Activated CD4-positive, alpha-beta T cell treated with anti-CD3 and anti-CD28 coated beads for 36 hours (primary cell): ENCODE measurements at regions of chr14 and their contacts with region 1.

Region 1: DNA sequence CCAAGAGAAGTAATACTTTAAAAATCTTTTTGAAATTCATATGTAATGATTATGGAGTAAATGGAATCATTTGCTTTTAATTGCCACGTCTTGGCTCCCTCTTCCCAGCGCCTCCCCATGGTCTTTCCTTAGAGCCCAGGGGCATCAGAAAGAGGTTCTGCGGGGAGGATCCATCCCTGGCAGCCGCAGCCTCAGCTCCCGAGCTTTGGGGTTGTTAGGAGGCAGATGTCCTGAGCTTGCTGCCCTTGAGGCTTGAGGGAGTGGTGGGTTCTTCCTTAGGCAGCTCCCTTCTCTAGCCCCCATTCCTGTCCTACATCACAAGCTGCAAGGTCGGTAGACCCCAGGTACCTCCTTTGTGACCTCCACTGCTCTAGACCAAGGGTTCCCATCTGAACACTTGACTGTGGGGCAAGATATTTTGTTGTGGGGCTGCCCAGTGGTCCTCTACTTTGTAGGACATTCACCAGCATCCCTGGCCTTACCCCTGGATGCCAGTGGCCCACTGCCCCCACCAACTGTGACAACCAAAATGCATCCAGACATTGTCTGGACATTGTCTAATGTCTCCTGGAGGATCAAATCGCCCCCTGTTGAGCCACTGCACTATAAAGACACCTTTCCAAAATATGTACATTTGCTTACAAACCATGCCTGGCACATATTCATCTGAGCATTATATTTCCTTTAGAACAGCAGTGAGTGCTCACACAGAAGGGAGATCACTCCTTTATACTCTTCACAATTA is 6.3 kb downstream of the PPP2R5C start:
- DNase-seq: no peak
- ATAC-seq: no peak
- H3K4me3 Mint-ChIP-seq: no peak overlapping the region
- H3K27ac Mint-ChIP-seq: no peak overlapping the region
- H3K4me1 Mint-ChIP-seq: peaks cover 42% of the 10 kb centered on the region
- H3K27me3 Mint-ChIP-seq: no peaks in the 10 kb centered on the region

Region 2: DNA sequence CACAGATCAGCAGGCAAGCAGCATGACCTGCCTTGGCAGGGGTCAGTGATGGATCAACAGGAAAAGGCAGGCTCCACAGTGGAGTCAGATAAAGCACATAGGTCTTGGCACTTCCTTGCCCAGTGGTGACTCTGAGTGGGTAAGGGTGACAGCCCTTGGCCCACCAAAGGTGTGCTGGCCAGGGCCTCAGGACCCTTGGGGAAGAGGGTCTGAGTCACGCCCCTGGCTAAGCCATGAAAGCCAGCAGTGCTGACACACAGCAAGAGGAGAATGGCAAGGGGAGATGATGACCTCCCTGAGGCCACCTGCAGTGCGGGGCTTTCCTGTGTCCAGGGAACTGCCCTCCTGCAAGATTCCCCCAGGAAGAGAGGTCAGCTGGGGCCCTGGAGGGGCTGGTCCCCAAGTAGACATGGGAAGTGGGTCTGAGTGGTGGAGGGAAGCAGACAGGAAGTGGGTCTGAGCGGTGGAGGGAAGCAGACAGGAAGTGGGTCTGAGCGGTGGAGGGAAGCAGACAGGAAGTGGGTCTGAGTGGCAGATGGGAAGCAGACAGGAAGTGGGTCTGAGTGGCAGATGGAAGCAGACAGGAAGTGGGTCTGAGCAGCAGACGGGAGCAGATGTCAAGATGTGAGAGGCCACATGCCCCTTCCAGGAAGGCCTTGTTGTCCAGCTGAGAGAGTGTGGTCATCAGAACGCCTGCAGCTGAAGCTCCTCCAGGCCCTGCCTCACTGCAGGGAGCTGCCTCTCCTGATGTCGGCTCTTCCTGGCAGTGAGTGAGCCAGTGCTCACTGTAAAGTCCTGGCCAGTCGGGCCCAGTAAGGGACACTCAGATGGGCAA is 171.7 kb before region 1 on chr14:
- CTCF ChIA-PET with region 1: no interaction called
- POLR2A ChIA-PET with region 1: no interaction called
- intact Hi-C with region 1: no loop called
- DNase-seq: peak; percentile 46
- ATAC-seq: peak; percentile 62
- H3K4me3 Mint-ChIP-seq: no peak overlapping the region
- H3K27ac Mint-ChIP-seq: peak overlapping the region; percentile 83
- H3K4me1 Mint-ChIP-seq: peaks cover 32% of the 10 kb centered on the region
- H3K27me3 Mint-ChIP-seq: no peaks in the 10 kb centered on the region

Region 3: DNA sequence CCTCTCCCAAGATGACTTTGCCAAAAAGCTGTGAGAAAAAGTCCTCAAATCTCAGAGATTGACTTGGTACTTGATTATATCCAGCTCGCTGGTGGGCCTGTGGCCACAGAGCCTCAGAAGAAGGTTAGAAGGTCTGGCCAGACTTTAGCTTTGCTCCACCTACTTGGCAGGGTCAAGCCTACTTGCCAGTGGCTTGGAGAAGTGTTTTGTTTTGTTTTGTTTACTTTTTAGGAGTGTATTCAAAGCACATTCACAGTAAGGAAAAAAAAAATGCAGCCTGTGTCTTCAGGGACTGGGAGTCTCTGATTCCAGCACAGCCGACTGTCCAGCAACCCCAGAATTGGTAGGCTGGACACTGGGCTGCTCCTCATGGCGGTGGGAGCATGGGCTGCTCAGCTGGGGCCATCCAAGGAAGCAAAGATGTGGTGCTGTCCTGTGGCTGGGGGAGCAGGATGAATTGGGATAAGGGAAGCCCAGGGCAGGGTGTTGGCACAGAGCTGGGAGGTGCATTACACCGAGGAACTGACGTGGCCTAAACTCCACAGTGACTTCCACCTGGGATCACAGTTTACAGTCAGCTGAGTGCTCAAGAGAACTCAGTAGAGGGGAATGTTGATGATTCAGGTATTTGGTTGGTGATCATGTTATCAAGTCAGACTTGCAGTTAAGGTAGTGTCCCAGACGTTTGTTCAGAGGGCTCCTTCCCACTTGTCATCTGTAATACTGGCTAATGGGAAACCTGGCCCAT is 67.2 kb after region 1 on chr14:
- CTCF ChIA-PET with region 1: interaction called, 17 read pairs
- POLR2A ChIA-PET with region 1: no interaction called
- intact Hi-C with region 1: no loop called
- DNase-seq: no peak
- ATAC-seq: no peak
- H3K4me3 Mint-ChIP-seq: no peak overlapping the region
- H3K27ac Mint-ChIP-seq: peak overlapping the region; percentile 70
- H3K4me1 Mint-ChIP-seq: peaks cover 93% of the 10 kb centered on the region
- H3K27me3 Mint-ChIP-seq: no peaks in the 10 kb centered on the region

Region 4: GRCh38 chr14:101843665-101844064 is 75.9 kb after region 1 on chr14:
- CTCF ChIA-PET with region 1: interaction called, 41 read pairs
- POLR2A ChIA-PET with region 1: no interaction called
- intact Hi-C with region 1: loop called (anchors 1 to 2 kb)
- DNase-seq: peak; percentile 78
- ATAC-seq: peak; percentile 66
- H3K4me3 Mint-ChIP-seq: no peak overlapping the region
- H3K27ac Mint-ChIP-seq: peak overlapping the region; percentile 82
- H3K4me1 Mint-ChIP-seq: peaks cover 87% of the 10 kb centered on the region
- H3K27me3 Mint-ChIP-seq: no peaks in the 10 kb centered on the region

Region 5: GRCh38 chr14:101854366-101854765 is 86.6 kb after region 1 on chr14:
- CTCF ChIA-PET with region 1: interaction called, 19 read pairs
- POLR2A ChIA-PET with region 1: no interaction called
- intact Hi-C with region 1: no loop called
- DNase-seq: no peak
- ATAC-seq: peak; percentile 84
- H3K4me3 Mint-ChIP-seq: peak overlapping the region; percentile 8
- H3K27ac Mint-ChIP-seq: peak overlapping the region; percentile 88
- H3K4me1 Mint-ChIP-seq: peaks cover 87% of the 10 kb centered on the region
- H3K27me3 Mint-ChIP-seq: no peaks in the 10 kb centered on the region